Activated CD4-positive, alpha-beta T cell treated with anti-CD3 and anti-CD28 coated beads, Interleukin-2, amount 10 ng/mL, durations not matched to agents 24 days and 14 days (primary cell): ENCODE measurements at regions of chr4 and their contacts with region 1.

Region 1: DNA sequence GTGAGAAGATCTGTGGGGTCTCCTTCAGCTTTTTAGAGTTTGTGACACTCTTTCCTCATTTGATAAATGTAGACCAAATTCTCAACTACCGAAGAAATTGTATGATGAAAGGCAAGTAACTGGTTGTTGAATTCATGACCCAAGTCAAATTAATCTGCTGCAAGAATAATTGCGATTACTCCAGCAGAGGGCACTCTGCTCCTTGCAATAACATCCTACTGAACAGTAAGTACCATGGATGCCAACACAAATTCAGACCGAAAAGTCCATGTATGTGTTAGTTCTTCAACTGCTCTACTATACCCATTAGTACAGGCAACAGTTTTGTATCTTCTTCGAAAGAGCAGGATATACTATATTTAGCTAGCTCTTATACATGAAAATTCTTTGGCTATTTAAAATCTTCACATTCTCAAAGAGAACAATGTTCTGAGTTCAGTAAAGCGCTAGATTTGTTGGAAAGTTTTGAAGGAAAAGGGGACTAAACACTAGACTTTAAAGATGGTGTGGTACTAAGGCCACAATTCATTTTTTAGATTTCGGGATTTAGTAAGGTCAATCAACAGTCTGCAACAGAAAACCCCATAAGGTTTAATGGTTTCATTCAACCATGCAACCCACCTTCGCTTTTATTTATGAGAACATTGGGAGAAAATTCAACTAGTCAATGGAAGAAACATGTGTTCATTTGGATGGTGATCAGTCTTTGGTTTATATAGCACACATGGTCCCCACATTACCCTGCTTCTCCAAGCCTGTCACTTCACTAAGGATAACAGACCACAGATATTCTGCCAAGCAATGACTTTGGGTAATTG is 105.4 kb upstream of the TBC1D9 start:
- DNase-seq: peak; percentile 86
- H3K4me3 Mint-ChIP-seq: no peak overlapping the region
- H3K27ac Mint-ChIP-seq: no peak overlapping the region
- H3K4me1 Mint-ChIP-seq: peaks cover 7% of the 10 kb centered on the region
- H3K27me3 Mint-ChIP-seq: peaks cover 12% of the 10 kb centered on the region

Region 2: DNA sequence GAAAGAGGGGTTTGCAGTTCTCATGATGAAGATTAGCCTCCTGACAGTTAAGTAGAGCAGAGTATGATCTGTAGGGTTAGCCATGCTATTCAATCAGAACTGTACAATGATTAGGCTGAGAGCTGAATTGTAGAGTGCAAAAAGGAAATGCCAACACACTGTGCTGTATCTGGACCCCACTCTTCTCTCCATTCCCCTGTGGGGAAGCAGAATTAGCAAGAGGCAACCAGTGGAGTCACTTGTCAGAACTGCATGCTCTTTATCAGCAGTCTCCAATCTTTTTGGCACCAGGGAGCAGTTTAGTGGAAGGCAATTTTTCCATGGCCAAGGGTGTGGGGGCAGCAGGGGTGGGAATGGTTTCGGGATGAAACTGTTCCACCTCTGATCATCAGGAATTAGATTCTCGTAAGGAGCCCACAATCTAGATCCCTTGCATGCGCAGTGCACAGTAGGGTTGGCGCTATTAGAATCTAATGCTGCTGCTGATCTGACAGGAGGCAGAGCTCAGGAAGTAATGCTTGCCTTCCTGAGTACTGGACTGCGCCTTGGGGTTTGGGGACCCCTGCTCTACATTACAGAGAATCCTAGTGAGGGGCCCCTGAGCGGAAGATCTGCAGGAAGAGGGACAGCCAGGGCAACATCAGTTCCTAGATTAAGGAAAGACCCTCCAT is 124.8 kb before region 1 on chr4:
- intact Hi-C with region 1: no loop called
- DNase-seq: no peak
- H3K4me3 Mint-ChIP-seq: no peak overlapping the region
- H3K27ac Mint-ChIP-seq: no peak overlapping the region
- H3K4me1 Mint-ChIP-seq: no peaks in the 10 kb centered on the region
- H3K27me3 Mint-ChIP-seq: peaks cover 17% of the 10 kb centered on the region

Region 3: DNA sequence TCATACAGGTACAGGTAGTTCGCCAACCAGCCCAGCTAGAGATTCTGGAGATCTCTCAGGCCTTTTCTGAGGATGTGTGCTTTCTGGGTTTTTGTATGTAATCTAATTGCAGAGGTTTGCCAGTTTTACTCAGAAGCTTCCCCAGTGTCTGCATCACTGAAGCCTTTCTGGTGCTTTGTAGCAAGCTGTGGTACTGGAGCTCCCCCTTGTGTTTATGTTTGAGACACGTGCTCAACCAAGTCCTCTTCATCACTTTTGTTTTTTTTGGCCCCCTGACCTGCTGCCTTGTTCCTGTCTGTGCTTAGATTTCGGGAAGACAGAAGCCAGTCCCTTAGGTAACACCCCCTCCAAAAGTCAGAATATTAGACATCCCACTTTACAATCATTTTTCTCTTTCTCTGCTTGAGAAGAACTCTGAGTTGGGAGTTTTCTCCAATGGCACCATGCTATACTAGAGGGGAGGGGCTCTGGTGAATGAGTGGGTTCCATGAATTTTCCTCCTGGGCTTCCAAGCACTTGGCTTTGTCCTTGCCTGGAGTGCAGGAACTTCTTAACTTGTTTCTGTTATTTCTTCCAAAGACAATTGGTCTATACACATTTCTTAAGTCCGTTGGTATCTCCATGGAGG is 23.0 kb after region 1 on chr4:
- intact Hi-C with region 1: loop called (anchors 1 kb)
- DNase-seq: peak; percentile 80
- H3K4me3 Mint-ChIP-seq: no peak overlapping the region
- H3K27ac Mint-ChIP-seq: no peak overlapping the region
- H3K4me1 Mint-ChIP-seq: peaks cover 1% of the 10 kb centered on the region
- H3K27me3 Mint-ChIP-seq: peaks cover 3% of the 10 kb centered on the region

Region 4: GRCh38 chr4:141133146-141133998 is 271.8 kb after region 1 on chr4 and contains the start of gene RNF150:
- intact Hi-C with region 1: loop called (anchors 1 kb)
- DNase-seq: peak; percentile 78
- H3K4me3 Mint-ChIP-seq: peak within 1 kb of the TSS; percentile 93
- H3K27ac Mint-ChIP-seq: no peak within 1 kb of the TSS
- H3K4me1 Mint-ChIP-seq: peaks cover 10% of the 10 kb centered on the region
- H3K27me3 Mint-ChIP-seq: peaks cover 74% of the 10 kb centered on the region
- total RNA-seq, gene RNF150: 0.02 TPM in 1 of 2 replicates, not detected in the other

Region 5: GRCh38 chr4:141275834-141276233 is 414.3 kb after region 1 on chr4:
- intact Hi-C with region 1: no loop called
- DNase-seq: no peak
- H3K4me3 Mint-ChIP-seq: no peak overlapping the region
- H3K27ac Mint-ChIP-seq: no peak overlapping the region
- H3K4me1 Mint-ChIP-seq: no peaks in the 10 kb centered on the region
- H3K27me3 Mint-ChIP-seq: peaks cover 2% of the 10 kb centered on the region